BJ (cell line): ENCODE measurements at regions of chr14 and their contacts with region 1.

Region 1: DNA sequence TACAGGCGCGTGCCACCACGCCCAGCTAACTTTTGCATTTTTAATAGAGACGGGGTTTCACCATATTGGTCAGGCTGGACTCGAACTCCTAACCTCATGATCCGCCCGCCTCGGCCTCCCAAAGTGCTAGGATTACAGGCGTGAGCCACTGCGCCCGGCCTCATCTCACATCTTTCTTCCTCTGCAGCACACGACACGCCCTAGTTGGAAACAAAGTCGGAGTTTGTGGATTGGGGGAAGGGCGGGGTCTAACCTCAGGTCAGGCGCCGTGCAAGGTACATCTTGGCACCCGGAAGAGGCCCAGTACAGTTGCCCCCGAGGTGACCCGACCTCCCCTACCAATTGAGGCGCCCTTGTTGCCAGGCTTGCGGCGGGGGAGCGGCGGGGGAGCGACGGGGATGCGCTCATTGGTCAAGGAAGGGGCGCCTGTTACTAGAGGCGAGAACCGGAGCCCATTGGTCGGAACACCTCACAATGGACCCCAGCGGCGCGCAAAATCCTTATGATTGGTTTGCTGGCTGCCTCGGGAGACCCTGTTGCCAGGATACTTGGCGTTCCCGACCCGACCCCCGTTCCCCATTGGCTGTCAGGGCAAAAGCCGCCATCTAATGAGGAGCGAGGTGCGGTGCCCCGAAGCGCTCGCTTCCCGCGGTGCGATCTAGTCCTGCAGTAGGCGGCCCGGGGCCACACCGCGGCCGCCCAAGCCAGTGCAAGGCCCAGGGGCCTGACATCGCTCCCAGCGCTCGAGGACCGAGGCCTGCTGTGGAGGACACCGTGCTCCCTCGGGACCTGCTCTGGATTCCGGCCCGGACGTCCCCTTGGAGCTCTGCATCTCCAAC is at the start of gene REC8:
- DNase-seq: no peak
- H3K4me3 ChIP-seq: no peak within 1 kb of the TSS
- H3K27me3 ChIP-seq: no peaks in the 10 kb centered on the region
- CTCF ChIP-seq: no peak
- polyA plus RNA-seq, gene REC8: 2.7 and 5.5 TPM in 2 replicates

Region 2: GRCh38 chr14:23387916-23388882 is 783.4 kb before region 1 on chr14:
- CTCF ChIA-PET with region 1: no interaction called
- POLR2A ChIA-PET with region 1: interaction called, 12 read pairs
- DNase-seq: no peak
- H3K4me3 ChIP-seq: no peak overlapping the region
- H3K27me3 ChIP-seq: peaks cover 2% of the 10 kb centered on the region; the same call in 1 of the 2 replicates
- CTCF ChIP-seq: no peak

Region 3: GRCh38 chr14:24188251-24189058 is 16.8 kb after region 1 on chr14 and contains the start of gene IPO4:
- CTCF ChIA-PET with region 1: no interaction called
- POLR2A ChIA-PET with region 1: no interaction called
- DNase-seq: peak; percentile 79
- H3K4me3 ChIP-seq: peak within 1 kb of the TSS; percentile 70
- H3K27me3 ChIP-seq: no peaks in the 10 kb centered on the region
- CTCF ChIP-seq: no peak
- polyA plus RNA-seq, gene IPO4: 11.5 and 26.8 TPM in 2 replicates